ENCODE measurements at regions of chr14 and their contacts with region 1.

Region 1: GRCh38 chr14:22200977-22201605 is 387.9 kb downstream of the DAD1 start:
- DNase-seq: peak; percentile 10
- ATAC-seq: peak; percentile 95
- H3K4me3 Mint-ChIP-seq: no peak overlapping the region
- H3K27ac Mint-ChIP-seq: no peak overlapping the region
- H3K4me1 Mint-ChIP-seq: no peaks in the 10 kb centered on the region
- H3K27me3 Mint-ChIP-seq: peaks cover 3% of the 10 kb centered on the region; the same call in 1 of the 2 replicates
- CTCF ChIP-seq: peak; percentile 60

Region 2: GRCh38 chr14:21997300-21997699 is 203.8 kb before region 1 on chr14:
- CTCF ChIA-PET with region 1: interaction called, 18 read pairs
- POLR2A ChIA-PET with region 1: no interaction called
- DNase-seq: peak; percentile 39
- ATAC-seq: peak; percentile 100
- H3K4me3 Mint-ChIP-seq: no peak overlapping the region
- H3K27ac Mint-ChIP-seq: peak overlapping the region; percentile 63; the same call in 1 of the 2 replicates
- H3K4me1 Mint-ChIP-seq: peaks cover 3% of the 10 kb centered on the region
- H3K27me3 Mint-ChIP-seq: no peaks in the 10 kb centered on the region
- CTCF ChIP-seq: no peak

Region 3: GRCh38 chr14:22112004-22112403 is 89.1 kb before region 1 on chr14:
- CTCF ChIA-PET with region 1: interaction called, 17 read pairs
- POLR2A ChIA-PET with region 1: no interaction called
- DNase-seq: peak; percentile 63
- ATAC-seq: no peak
- H3K4me3 Mint-ChIP-seq: no peak overlapping the region
- H3K27ac Mint-ChIP-seq: no peak overlapping the region
- H3K4me1 Mint-ChIP-seq: peaks cover 18% of the 10 kb centered on the region
- H3K27me3 Mint-ChIP-seq: 0 out of 2 replicates have a peak, but pooled peaks cover 4% of the 10 kb centered on the region
- CTCF ChIP-seq: peak; percentile 49

Region 4: GRCh38 chr14:22168092-22168955 is 32.8 kb before region 1 on chr14:
- CTCF ChIA-PET with region 1: interaction called, 31 read pairs
- POLR2A ChIA-PET with region 1: no interaction called
- DNase-seq: no peak
- ATAC-seq: peak; percentile 74
- H3K4me3 Mint-ChIP-seq: no peak overlapping the region
- H3K27ac Mint-ChIP-seq: peak overlapping the region; percentile 6; the same call in 1 of the 2 replicates
- H3K4me1 Mint-ChIP-seq: peaks cover 50% of the 10 kb centered on the region
- H3K27me3 Mint-ChIP-seq: no peaks in the 10 kb centered on the region
- CTCF ChIP-seq: no peak

Region 5: GRCh38 chr14:22221508-22221907 is 20.4 kb after region 1 on chr14:
- CTCF ChIA-PET with region 1: interaction called, 25 read pairs
- POLR2A ChIA-PET with region 1: no interaction called
- DNase-seq: no peak
- ATAC-seq: no peak
- H3K4me3 Mint-ChIP-seq: no peak overlapping the region
- H3K27ac Mint-ChIP-seq: no peak overlapping the region
- H3K4me1 Mint-ChIP-seq: peaks cover 2% of the 10 kb centered on the region
- H3K27me3 Mint-ChIP-seq: no peaks in the 10 kb centered on the region
- CTCF ChIP-seq: no peak

Region 6: DNA sequence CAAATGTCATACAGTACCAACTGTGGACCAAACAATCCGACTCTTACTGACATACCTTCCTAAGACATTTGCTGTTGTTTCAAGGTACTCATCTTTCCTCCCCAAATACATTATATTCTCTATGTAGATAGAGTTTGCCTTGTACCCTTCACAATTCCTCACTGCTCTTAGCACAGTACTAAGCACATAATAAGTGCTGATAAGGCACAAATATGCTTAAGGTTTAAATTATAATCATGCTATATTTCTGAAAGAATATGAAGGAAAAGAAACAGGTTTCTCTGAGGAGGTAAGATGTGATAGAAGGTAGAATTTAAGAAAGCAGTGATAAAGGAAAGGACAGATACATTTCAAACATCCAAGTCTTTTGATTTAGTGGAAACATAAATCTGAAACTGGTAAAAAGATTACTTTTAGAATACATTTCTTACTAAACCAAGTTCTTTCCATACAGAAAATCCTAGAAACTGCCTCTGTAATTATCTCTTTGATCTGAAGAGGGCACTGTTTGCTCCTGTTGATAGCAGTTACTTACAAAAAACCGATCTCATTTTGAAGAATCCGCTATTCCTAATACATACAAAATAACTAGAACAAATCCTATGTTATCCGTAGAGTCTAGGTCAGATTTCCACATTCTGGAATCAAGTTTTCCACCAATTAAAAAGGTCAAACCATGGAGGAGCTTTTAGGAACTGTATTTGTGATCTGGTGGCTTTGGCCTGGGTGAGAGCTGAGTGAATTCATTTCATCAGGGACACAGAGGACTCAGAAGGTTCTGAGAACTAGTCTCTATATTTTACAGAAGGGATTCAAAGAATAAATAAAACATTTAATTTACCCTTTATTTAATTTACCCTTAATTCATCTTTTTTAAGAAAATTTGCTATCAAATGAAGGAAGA is 76.1 kb after region 1 on chr14:
- CTCF ChIA-PET with region 1: interaction called, 20 read pairs
- POLR2A ChIA-PET with region 1: no interaction called
- DNase-seq: no peak
- ATAC-seq: no peak
- H3K4me3 Mint-ChIP-seq: no peak overlapping the region
- H3K27ac Mint-ChIP-seq: no peak overlapping the region
- H3K4me1 Mint-ChIP-seq: peaks cover 8% of the 10 kb centered on the region
- H3K27me3 Mint-ChIP-seq: no peaks in the 10 kb centered on the region; the same call in 1 of the 2 replicates
- CTCF ChIP-seq: peak; percentile 36; the same call in 1 of the 2 replicates

Region 7: GRCh38 chr14:22380571-22381407 is 179.7 kb after region 1 on chr14:
- CTCF ChIA-PET with region 1: interaction called, 23 read pairs
- POLR2A ChIA-PET with region 1: no interaction called
- DNase-seq: no peak
- ATAC-seq: no peak
- H3K4me3 Mint-ChIP-seq: no peak overlapping the region
- H3K27ac Mint-ChIP-seq: no peak overlapping the region
- H3K4me1 Mint-ChIP-seq: peaks cover 12% of the 10 kb centered on the region
- H3K27me3 Mint-ChIP-seq: no peaks in the 10 kb centered on the region
- CTCF ChIP-seq: no peak

Region 8: GRCh38 chr14:22420598-22421186 is 219.6 kb after region 1 on chr14:
- CTCF ChIA-PET with region 1: no interaction called
- POLR2A ChIA-PET with region 1: no interaction called
- DNase-seq: no peak
- ATAC-seq: no peak
- H3K4me3 Mint-ChIP-seq: no peak overlapping the region
- H3K27ac Mint-ChIP-seq: no peak overlapping the region
- H3K4me1 Mint-ChIP-seq: peaks cover 17% of the 10 kb centered on the region
- H3K27me3 Mint-ChIP-seq: no peaks in the 10 kb centered on the region
- CTCF ChIP-seq: no peak

Measured in WTC11 (cell line).